ENCODE measurements at regions of chr12 and their contacts with region 1.

Region 1: DNA sequence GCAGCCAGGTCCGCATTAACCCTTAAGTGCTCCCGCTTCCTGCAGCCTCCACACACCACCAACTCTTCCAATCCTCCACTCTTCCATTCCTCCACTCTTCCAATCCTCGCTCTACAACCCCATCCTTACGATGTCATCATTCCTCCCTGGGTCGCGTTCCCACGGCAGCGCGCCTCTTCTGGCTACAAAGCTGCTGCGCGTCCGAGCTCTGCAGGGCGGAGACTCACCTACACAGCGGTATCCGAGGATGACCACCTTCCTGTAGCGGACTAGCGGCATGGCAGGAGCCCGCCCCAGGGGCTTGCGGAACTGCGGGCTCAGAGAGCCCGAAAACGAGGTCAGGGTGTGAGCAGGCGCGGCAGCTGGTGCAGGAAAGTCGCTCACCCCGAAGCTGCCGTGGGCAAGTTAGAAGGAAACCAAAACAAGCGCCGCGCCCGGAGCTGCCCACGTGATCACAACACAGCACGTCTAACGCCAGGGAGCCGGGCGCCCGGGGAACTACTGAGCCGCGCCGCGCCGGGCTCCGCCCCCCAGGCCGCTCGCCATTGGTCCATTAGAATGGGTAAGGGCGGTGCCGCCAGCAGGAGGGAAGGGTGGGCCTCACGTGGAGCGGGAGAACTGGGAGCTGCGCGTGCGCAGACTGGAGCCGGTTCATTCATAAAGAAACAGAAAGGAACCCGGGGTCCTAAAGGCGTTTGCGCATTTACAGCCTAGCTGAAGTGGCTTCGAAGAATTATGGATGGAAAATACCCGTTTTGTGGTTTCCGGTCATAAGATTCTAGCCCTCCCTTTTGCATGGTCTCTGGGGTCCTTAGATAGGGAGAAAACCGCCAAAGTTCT is at the start of gene RHEBL1:
- DNase-seq: peak; percentile 100
- H3K4me3 Mint-ChIP-seq: peak within 1 kb of the TSS; percentile 94
- H3K27ac Mint-ChIP-seq: peak within 1 kb of the TSS; percentile 87
- H3K4me1 Mint-ChIP-seq: peaks cover 25% of the 10 kb centered on the region
- H3K27me3 Mint-ChIP-seq: no peaks in the 10 kb centered on the region
- total RNA-seq, gene RHEBL1: 10.9 and 11.8 TPM in 2 replicates

Region 2: GRCh38 chr12:49018261-49019119 is 51.2 kb before region 1 on chr12 and contains the start of gene PRKAG1:
- intact Hi-C with region 1: no loop called
- DNase-seq: peak; percentile 99
- H3K4me3 Mint-ChIP-seq: peak within 1 kb of the TSS; percentile 90
- H3K27ac Mint-ChIP-seq: peak within 1 kb of the TSS; percentile 91
- H3K4me1 Mint-ChIP-seq: peaks cover 25% of the 10 kb centered on the region
- H3K27me3 Mint-ChIP-seq: no peaks in the 10 kb centered on the region
- total RNA-seq, gene PRKAG1: 75.3 and 89.8 TPM in 2 replicates

Region 3: GRCh38 chr12:49110464-49111155 is 40.9 kb after region 1 on chr12 and contains the start of gene LMBR1L:
- intact Hi-C with region 1: loop called (anchors 2 kb)
- DNase-seq: peak; percentile 99
- H3K4me3 Mint-ChIP-seq: peak within 1 kb of the TSS; percentile 97
- H3K27ac Mint-ChIP-seq: peak within 1 kb of the TSS; percentile 94
- H3K4me1 Mint-ChIP-seq: peaks cover 24% of the 10 kb centered on the region
- H3K27me3 Mint-ChIP-seq: no peaks in the 10 kb centered on the region
- total RNA-seq, gene LMBR1L: 39.9 and 43.7 TPM in 2 replicates

Measured in activated CD4-positive, alpha-beta T cell treated with anti-CD3 and anti-CD28 coated beads, Interleukin-2, amount 10 ng/mL, durations not matched to agents 24 days and 14 days (primary cell).